IMR-90 (cell line): ENCODE measurements at regions of chr18 and their contacts with region 1.

Region 1: GRCh38 chr18:48951448-48952286 is 902 bp upstream of the SMAD7 start:
- DNase-seq: peak; percentile 86
- ATAC-seq: peak; percentile 41
- H3K4me3 ChIP-seq: peak overlapping the region; percentile 99
- H3K27ac ChIP-seq: peak overlapping the region; percentile 96
- H3K4me1 ChIP-seq: peaks cover 14% of the 10 kb centered on the region
- H3K27me3 ChIP-seq: no peaks in the 10 kb centered on the region
- CTCF ChIP-seq: peak; percentile 31
- POLR2A ChIP-seq: peak; percentile 80
- RAD21 ChIP-seq: peak; percentile 43

Region 2: DNA sequence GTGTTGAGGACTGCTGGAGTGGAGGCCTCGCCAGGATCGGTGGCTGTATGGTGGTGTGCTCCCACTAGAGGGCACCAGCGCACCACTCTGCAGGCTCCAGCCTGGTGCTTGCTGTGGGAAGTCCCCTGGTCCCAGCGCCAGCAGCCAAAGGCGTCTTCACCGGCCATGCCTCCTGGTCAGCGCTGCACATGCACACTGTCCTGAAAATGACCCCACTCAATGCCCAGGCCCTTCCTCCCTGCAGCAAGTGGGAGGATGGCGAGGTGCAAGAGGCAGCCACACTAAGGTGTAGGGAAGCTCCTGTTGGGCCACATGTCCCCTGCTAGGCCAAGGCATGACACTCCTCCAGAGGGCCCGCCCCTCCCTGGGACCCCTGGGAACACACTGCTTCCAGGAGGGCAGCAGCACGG is 276.3 kb before region 1 on chr18:
- CTCF ChIA-PET with region 1: no interaction called
- POLR2A ChIA-PET with region 1: no interaction called
- dilution Hi-C with region 1: no loop called
- in situ Hi-C with region 1: no loop called
- intact Hi-C with region 1: loop called (anchors 1 kb)
- DNase-seq: peak; percentile 89
- ATAC-seq: peak; percentile 96
- H3K4me3 ChIP-seq: no peak overlapping the region
- H3K27ac ChIP-seq: no peak overlapping the region
- H3K4me1 ChIP-seq: peaks cover 23% of the 10 kb centered on the region
- H3K27me3 ChIP-seq: no peaks in the 10 kb centered on the region
- CTCF ChIP-seq: peak; percentile 97
- POLR2A ChIP-seq: no peak
- RAD21 ChIP-seq: peak; percentile 95

Region 3: DNA sequence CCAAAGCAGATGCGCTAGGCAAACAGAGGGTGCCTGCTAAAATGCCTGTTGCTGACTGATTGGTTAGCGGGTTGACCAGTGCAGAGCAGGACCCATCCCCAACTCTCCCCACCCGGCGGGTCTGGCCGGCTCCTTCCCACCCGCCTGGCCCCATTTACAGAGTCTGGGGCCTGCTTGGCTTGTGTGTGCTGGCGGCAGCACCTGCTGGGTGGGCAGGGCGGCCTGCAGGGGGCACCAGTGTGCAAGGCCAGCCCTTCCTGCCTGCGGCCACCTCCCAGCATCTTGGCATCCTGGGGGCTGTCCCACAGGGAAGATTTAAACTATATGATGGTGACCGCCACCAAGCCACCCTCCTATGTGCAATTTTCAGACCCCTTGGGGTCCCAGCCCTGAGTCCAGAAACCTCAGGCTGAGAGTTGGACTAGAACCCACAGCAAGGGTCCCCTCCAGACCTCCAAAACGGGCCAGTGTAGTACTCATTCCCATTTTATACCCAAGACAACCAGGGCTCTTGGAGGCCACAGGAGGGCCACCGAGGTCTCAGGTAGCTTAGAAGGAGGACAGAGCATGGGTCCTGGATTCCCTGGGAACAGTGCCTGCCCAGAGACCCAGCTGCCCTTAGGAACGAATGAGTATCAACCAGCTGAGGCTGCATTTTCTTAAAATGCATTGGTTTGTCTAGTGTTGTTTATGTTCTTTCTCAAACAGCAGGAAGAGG is 174.5 kb before region 1 on chr18:
- CTCF ChIA-PET with region 1: interaction called, 3 read pairs
- POLR2A ChIA-PET with region 1: no interaction called
- dilution Hi-C with region 1: no loop called
- in situ Hi-C with region 1: no loop called
- intact Hi-C with region 1: loop called (anchors 2 kb)
- DNase-seq: peak; percentile 20
- ATAC-seq: peak; percentile 50
- H3K4me3 ChIP-seq: no peak overlapping the region
- H3K27ac ChIP-seq: no peak overlapping the region
- H3K4me1 ChIP-seq: peaks cover 39% of the 10 kb centered on the region
- H3K27me3 ChIP-seq: no peaks in the 10 kb centered on the region
- CTCF ChIP-seq: peak; percentile 72
- POLR2A ChIP-seq: no peak
- RAD21 ChIP-seq: peak; percentile 78

Region 4: GRCh38 chr18:48922801-48923730 is 28.6 kb before region 1 on chr18:
- CTCF ChIA-PET with region 1: interaction called, 3 read pairs
- POLR2A ChIA-PET with region 1: interaction called, 17 read pairs
- dilution Hi-C with region 1: no loop called
- in situ Hi-C with region 1: no loop called
- intact Hi-C with region 1: no loop called
- DNase-seq: peak; percentile 82
- ATAC-seq: peak; percentile 75
- H3K4me3 ChIP-seq: no peak overlapping the region
- H3K27ac ChIP-seq: peak overlapping the region; percentile 93
- H3K4me1 ChIP-seq: peaks cover 47% of the 10 kb centered on the region
- H3K27me3 ChIP-seq: no peaks in the 10 kb centered on the region
- CTCF ChIP-seq: no peak
- POLR2A ChIP-seq: 0 out of 2 replicates have a peak, but pooled peaks have one; percentile 40
- RAD21 ChIP-seq: peak; percentile 14; the same call in 1 of the 2 replicates

Region 5: DNA sequence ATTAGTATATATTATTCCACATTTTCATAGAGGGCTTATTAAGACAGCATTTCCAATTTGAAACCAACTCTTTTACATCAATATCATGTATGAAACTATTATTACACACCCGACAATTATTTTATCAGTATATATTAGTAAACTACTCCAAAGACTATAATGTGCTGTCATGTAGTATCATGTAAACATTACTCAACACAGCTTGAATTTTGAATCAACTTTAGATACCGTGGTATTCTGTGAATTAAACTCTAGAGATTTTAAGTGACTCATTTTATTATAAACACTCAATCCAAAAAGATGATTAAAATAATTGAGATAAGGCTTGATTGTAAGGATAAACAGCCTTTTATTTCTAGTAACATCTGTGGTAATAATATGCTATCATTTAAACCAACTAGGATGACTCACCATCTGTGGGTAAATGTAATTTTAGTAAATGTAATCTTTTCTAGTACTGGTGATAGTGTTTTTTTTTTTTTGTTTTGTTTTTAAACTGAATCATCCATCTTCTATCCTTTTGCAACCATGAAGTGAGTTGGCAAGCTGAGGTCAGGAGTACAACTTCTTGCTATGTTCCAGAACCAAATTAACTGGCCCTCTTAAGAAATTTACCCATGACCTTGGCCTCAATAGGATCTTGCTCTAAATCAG is 143.4 kb after region 1 on chr18:
- CTCF ChIA-PET with region 1: no interaction called
- POLR2A ChIA-PET with region 1: no interaction called
- dilution Hi-C with region 1: no loop called
- in situ Hi-C with region 1: no loop called
- intact Hi-C with region 1: loop called (anchors 5 kb)
- DNase-seq: peak; percentile 92
- ATAC-seq: peak; percentile 66
- H3K4me3 ChIP-seq: no peak overlapping the region
- H3K27ac ChIP-seq: no peak overlapping the region
- H3K4me1 ChIP-seq: peaks cover 6% of the 10 kb centered on the region
- H3K27me3 ChIP-seq: 0 out of 2 replicates have a peak, but pooled peaks cover 1% of the 10 kb centered on the region
- CTCF ChIP-seq: no peak
- POLR2A ChIP-seq: no peak
- RAD21 ChIP-seq: no peak

Region 6: DNA sequence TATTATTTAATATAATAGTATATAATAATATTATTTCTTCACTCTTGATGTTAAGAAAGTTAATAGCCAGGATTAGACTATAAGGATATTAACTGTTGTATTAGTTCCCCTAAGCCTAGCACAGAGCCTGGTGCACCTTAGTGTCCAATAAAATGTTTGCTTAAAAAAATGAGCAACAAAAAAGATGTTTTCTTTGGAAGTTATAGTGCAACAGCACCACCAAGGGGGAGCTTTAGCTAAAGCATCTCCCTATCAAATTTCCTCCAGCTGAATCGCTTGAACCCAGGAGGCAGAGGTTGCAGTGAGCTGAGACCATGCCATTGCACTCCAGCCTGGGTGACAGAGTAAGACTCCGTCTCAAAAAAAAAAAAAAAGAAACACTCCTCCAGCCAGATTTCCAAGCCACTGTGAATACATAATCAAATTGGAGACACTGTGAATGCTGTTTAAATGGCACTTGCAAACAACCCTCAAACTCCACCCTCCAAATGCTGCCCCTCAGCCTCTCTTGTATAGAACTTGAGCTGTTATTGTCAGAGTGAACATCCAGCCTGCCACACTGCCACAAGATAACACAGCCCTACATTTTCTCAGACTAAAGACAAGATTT is 286.9 kb after region 1 on chr18:
- CTCF ChIA-PET with region 1: interaction called, 3 read pairs
- POLR2A ChIA-PET with region 1: no interaction called
- dilution Hi-C with region 1: no loop called
- in situ Hi-C with region 1: no loop called
- intact Hi-C with region 1: loop called (anchors 2 kb)
- DNase-seq: peak; percentile 51
- ATAC-seq: peak; percentile 71
- H3K4me3 ChIP-seq: no peak overlapping the region
- H3K27ac ChIP-seq: no peak overlapping the region
- H3K4me1 ChIP-seq: peaks cover 2% of the 10 kb centered on the region; the same call in 1 of the 2 replicates
- H3K27me3 ChIP-seq: no peaks in the 10 kb centered on the region
- CTCF ChIP-seq: peak; percentile 72
- POLR2A ChIP-seq: no peak
- RAD21 ChIP-seq: peak; percentile 80

Region 7: GRCh38 chr18:49747876-49748275 is 796.2 kb after region 1 on chr18:
- CTCF ChIA-PET with region 1: no interaction called
- POLR2A ChIA-PET with region 1: interaction called, 15 read pairs
- dilution Hi-C with region 1: no loop called
- in situ Hi-C with region 1: no loop called
- intact Hi-C with region 1: no loop called
- DNase-seq: no peak
- ATAC-seq: peak; percentile 68
- H3K4me3 ChIP-seq: no peak overlapping the region
- H3K27ac ChIP-seq: no peak overlapping the region
- H3K4me1 ChIP-seq: no peaks in the 10 kb centered on the region
- H3K27me3 ChIP-seq: peaks cover 36% of the 10 kb centered on the region
- CTCF ChIP-seq: no peak
- POLR2A ChIP-seq: no peak
- RAD21 ChIP-seq: no peak